ENCODE measurements at regions of chr1 and their contacts with region 1.

Region 1: DNA sequence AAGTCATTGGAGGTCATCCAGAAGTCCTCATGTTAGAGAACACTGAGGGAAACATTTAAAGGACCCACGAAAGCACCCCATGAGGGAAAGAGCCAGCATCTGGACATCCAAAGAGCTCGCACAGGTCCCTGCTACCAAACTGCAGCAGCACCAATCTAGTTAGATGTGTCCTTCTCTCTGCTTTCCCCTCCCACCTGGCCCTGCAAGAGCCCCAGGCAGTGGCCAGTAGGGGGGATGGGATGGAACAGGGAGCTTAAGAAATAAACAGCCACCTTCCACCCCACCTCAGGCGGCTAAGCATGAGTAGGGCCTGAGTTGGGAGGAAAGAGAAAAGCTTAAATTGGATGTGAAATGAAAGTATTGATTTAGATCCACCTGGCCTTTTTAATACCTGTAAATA is 175.9 kb upstream of the KCND3 start:
- DNase-seq: no peak
- ATAC-seq: no peak
- H3K4me3 ChIP-seq: no peak overlapping the region
- H3K27ac ChIP-seq: no peak overlapping the region
- H3K4me1 ChIP-seq: no peaks in the 10 kb centered on the region
- H3K27me3 ChIP-seq: no peaks in the 10 kb centered on the region
- CTCF ChIP-seq: no peak

Region 2: DNA sequence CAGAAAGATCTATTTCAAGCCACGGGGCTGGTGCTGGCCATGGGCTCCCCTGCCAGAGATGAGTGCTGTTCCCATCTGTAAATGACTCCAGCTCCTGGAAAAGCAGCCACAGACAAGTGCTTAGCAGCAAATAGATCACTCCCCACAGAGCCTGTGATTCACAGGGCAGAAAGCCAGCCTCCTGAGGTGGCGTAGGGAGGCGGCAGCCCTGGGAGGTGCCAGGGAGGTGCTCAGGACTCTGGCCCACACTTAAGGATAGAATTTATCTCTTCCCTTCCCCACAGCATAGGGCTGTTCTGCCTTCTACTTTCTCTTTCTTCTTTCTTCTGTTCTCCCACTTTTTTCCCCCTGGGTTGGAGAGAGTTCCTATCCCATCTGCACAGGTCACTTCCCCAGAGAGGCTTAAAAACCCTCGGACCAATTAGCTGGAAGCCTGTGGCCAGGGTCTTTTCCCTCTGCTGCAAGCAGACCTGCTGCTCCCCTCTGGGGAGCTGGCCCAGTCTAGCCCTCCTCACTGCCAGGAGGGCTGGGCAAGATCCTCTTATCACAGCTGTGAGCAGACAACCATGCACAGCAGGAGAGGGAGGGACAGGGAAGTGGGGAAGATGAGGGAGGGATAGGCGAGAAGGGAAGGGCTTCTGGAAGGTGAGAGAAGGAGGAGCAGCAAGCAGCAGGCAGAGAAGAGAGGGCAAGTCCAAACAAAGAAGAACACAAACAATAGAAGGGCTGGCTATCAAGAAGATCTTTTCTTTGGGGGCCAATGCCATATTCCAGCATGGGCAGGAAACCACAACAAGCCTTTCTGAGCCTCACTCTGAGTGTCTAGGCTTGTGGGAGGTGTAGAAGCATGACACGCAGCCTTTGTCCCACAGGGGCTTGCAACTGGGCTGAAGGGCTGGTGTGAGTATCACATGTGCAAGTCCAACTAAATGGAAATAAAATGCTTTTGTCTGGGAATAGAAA is 216.9 kb before region 1 on chr1:
- intact Hi-C with region 1: no loop called
- DNase-seq: peak in 1 of 6 donors; percentile 23
- ATAC-seq: peak in 3 of 4 donors; percentile 56 to 88 (median 81)
- H3K4me3 ChIP-seq: no peak overlapping the region
- H3K27ac ChIP-seq: no peak overlapping the region
- H3K4me1 ChIP-seq: no peaks in the 10 kb centered on the region
- H3K27me3 ChIP-seq: no peaks in the 10 kb centered on the region
- CTCF ChIP-seq: no peak

Region 3: GRCh38 chr1:112040891-112041740 is 124.3 kb before region 1 on chr1:
- intact Hi-C with region 1: no loop called
- DNase-seq: no peak
- ATAC-seq: no peak
- H3K4me3 ChIP-seq: no peak overlapping the region
- H3K27ac ChIP-seq: no peak overlapping the region
- H3K4me1 ChIP-seq: no peaks in the 10 kb centered on the region
- H3K27me3 ChIP-seq: no peaks in the 10 kb centered on the region
- CTCF ChIP-seq: no peak

Region 4: DNA sequence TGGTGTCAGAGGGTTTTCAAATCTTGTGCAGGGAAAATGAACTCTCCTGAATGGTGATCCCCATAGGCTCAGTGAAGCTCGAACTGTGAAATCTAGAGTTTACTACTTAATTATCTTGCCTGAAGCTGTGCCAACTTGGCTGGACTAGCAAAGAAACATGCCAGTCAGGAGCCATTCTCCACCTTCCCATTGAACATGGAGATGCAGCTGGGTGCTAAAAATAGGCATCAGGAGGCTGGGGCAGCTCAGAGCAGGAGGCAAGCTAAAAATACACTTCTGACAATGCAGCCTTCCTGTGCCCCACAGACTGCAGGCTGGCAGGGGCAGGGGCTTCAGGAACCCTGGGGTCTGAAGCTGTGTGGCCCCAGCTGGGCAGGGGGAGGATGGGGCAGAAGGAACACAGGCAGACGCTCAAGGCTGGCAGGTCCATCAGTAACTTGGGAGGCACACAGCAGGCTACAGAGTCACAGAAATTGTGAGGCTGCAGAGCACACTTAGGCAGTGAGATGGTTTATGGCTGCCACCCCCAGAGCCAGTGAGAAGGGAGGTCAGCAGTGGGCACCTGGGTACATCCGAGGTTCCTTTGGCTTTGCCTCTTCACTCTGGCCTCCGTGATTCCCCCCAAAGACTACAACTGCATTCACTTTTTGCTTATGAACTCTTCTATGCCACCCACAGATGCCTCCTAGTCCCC is 20.5 kb before region 1 on chr1:
- intact Hi-C with region 1: loop called in 1 of 3 experiments (anchors 2 kb)
- DNase-seq: no peak
- ATAC-seq: no peak
- H3K4me3 ChIP-seq: no peak overlapping the region
- H3K27ac ChIP-seq: no peak overlapping the region
- H3K4me1 ChIP-seq: peaks cover 0 to 5% (median 0%) of the 10 kb centered on the region in 3 donors
- H3K27me3 ChIP-seq: no peaks in the 10 kb centered on the region
- CTCF ChIP-seq: no peak

Measured in pancreas (tissue), 10 donors.